ENCODE measurements at regions of chr17 and their contacts with region 1.

Region 1: DNA sequence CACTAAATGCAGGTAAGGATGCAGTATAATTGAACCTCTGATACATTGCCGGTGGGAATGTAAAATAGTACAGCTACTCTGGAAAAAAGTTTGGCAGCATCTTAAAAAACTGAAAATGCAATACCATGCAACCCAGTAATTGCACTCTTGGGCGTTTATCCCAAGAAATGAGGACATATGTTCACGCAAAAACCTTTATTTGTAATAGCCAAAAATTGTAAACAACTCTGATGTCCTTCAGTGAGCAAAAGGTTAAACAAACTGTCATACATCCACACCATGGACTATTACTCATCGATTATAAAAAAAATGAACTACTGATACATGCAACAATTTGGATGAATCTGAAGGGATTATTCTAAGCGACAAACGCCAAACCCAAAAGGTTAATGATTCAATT is 16.9 kb downstream of the SYNRG start:
- DNase-seq: no peak
- H3K4me3 ChIP-seq: no peak overlapping the region
- H3K27ac ChIP-seq: no peak overlapping the region
- H3K4me1 ChIP-seq: no peaks in the 10 kb centered on the region
- H3K27me3 ChIP-seq: no peaks in the 10 kb centered on the region
- CTCF ChIP-seq: no peak

Region 2: GRCh38 chr17:36475346-36475970 is 1116.8 kb before region 1 on chr17:
- CTCF ChIA-PET with region 1: no interaction called
- POLR2A ChIA-PET with region 1: no interaction called
- intact Hi-C with region 1: no loop called
- DNase-seq: no peak
- H3K4me3 ChIP-seq: no peak overlapping the region
- H3K27ac ChIP-seq: no peak overlapping the region
- H3K4me1 ChIP-seq: no peaks in the 10 kb centered on the region
- H3K27me3 ChIP-seq: peaks cover 96% of the 10 kb centered on the region
- CTCF ChIP-seq: no peak

Region 3: DNA sequence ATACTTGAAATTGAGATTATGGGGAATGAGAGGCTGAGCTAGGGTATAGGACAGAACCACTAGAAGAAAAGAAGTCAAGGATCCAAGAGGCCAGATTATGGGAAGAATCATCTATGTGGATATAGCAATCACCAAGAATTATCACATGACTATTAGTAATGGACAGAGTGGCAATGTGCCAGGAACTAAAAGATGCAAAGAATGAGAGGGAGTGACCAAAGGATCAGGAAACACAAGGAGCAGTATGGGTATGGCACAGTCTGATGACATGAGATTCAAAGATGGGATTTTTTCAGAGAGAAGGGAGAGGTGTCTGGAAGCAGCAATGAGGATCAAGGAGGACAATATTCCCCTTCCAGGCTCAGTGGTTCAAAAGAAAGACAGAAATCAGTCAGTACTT is 431.3 kb before region 1 on chr17:
- CTCF ChIA-PET with region 1: no interaction called
- POLR2A ChIA-PET with region 1: interaction called, 21 read pairs
- intact Hi-C with region 1: no loop called
- DNase-seq: no peak
- H3K4me3 ChIP-seq: no peak overlapping the region
- H3K27ac ChIP-seq: no peak overlapping the region
- H3K4me1 ChIP-seq: no peaks in the 10 kb centered on the region
- H3K27me3 ChIP-seq: no peaks in the 10 kb centered on the region
- CTCF ChIP-seq: no peak

Region 4: DNA sequence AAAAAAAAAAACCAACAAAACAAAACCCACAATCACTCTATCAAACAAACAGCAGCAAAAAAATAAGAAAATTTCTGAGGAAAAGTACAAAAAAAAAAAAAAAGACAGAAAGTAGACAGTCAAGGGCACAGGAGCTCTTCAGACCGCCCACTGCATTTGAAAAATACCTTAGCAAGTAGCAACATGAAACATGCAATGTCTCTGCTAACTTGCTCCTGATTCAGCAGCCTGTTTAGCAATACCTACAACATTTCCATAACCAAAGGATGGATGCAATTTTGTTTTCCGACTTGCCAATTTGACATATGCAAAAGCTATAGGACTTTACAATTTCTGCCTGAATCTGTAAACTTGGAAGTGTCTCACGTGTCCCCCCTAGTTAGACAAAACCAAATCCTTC is 40.5 kb before region 1 on chr17:
- CTCF ChIA-PET with region 1: no interaction called
- POLR2A ChIA-PET with region 1: no interaction called
- intact Hi-C with region 1: no loop called
- DNase-seq: no peak
- H3K4me3 ChIP-seq: no peak overlapping the region
- H3K27ac ChIP-seq: no peak overlapping the region
- H3K4me1 ChIP-seq: no peaks in the 10 kb centered on the region
- H3K27me3 ChIP-seq: no peaks in the 10 kb centered on the region
- CTCF ChIP-seq: no peak

Region 5: DNA sequence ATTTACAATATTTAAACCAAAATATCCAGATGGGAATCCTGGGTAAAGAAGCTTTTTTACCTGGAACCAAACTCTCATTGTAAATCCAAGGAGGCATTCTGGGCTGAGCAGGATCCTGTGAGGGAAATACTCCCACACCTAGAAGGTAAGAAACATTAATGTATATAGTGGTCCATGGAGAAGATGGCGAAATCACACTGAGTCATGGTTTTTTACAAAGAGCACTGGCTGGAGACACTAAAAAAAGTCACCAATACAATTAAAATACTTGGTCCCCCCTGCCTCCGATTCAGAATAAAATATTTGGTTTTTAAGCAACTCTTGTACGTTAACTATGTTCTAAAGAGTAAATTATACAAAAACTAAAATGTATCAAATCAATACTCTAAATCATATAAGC is 16.0 kb before region 1 on chr17:
- CTCF ChIA-PET with region 1: interaction called, 11 read pairs
- POLR2A ChIA-PET with region 1: no interaction called
- intact Hi-C with region 1: no loop called
- DNase-seq: no peak
- H3K4me3 ChIP-seq: no peak overlapping the region
- H3K27ac ChIP-seq: no peak overlapping the region
- H3K4me1 ChIP-seq: no peaks in the 10 kb centered on the region
- H3K27me3 ChIP-seq: no peaks in the 10 kb centered on the region
- CTCF ChIP-seq: no peak

Region 6: DNA sequence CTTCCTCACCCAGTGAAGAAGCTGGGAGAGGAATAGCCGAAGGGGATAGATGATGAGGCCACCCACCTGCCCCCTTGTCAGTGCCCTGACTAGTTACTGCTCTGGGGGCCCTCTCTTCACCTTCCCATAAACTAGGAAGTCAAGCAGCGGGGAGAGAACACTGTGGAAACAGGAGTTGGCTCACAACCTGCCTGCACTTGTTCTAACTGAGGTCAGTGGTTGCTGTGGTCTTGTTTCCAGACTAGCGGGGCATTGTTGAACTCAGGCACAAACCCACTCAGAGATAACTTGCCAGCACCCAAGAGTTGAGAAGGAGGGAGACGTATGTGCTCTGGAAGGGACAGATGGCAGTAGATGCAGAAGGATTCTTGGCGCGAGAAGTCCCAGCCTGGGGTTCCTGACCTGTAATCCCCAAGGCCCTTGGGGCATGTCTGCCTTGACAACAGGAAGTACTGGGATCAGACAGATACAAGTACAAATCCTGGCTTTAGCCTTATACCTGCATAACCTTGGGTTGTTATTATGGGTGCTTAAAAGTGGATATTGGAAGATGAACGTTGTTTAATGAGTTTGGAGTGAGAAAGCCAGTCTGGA is 99.6 kb after region 1 on chr17:
- CTCF ChIA-PET with region 1: no interaction called
- POLR2A ChIA-PET with region 1: no interaction called
- intact Hi-C with region 1: no loop called
- DNase-seq: no peak
- H3K4me3 ChIP-seq: no peak overlapping the region
- H3K27ac ChIP-seq: no peak overlapping the region
- H3K4me1 ChIP-seq: no peaks in the 10 kb centered on the region
- H3K27me3 ChIP-seq: no peaks in the 10 kb centered on the region
- CTCF ChIP-seq: no peak

Region 7: DNA sequence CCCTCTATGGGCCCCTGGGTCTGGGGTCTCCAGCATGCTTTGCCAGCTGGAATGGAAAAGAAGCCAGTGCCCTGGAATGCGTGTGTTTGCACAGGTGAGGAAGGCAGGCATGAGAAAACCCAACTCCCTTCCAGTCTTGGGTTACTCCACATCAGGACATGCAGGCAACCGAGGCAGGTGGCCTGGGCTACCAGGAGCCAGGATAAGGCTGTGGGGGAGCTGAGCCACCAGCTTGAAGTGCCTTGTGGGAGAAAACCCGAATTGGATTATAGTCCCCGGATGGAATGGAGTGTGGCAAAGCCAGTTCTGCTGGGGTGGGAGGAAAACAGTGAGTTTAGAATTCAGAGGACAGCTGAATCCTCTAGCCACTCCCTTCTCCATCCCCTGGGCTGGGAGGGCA is 1006.2 kb after region 1 on chr17:
- CTCF ChIA-PET with region 1: no interaction called
- POLR2A ChIA-PET with region 1: no interaction called
- intact Hi-C with region 1: no loop called
- DNase-seq: peak; percentile 82 to 87
- H3K4me3 ChIP-seq: no peak overlapping the region
- H3K27ac ChIP-seq: no peak overlapping the region
- H3K4me1 ChIP-seq: peaks cover 4% of the 10 kb centered on the region; the same call in 1 of the 2 replicates
- H3K27me3 ChIP-seq: no peaks in the 10 kb centered on the region
- CTCF ChIP-seq: no peak